ENCODE measurements at regions of chr11 and their contacts with region 1.

Region 1: DNA sequence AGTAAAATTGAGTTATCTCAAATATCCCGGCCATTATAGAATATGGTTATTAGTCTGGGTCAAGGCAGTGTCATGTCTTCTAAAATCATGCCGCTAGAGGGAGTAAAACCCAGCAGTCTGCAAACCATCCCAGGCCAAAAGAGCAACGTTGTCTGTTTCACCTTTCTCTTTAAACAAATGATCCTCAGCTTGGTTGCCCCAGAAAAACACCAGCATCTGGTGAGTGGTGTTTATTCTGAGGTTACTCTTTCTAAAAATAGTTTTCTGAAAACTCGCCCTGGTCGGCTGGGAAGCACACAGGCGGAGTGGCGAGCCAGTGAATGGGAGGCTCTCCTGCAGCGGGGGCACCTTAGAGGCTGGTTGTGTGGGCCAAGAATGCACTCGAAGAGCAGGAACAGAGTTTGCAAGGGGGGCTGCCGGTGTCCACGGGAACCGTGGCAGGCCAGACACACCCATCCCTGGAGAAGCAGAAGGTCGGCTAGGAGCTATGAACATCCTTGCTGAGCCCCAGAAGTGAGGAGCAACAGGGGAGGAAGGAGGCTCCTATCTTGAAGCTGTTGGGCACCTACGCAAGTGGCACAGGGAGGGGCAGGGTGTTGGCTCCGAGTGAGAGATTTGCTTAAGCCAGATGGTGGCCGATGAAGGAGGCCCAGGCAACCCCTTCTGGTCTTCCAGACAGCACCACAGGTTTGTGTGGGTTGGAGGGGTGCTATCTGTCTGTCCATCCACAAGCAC is 297.1 kb downstream of the ETS1 start:
- DNase-seq: peak; percentile 77
- H3K4me3 ChIP-seq: no peak overlapping the region
- H3K27ac ChIP-seq: no peak overlapping the region
- H3K4me1 ChIP-seq: no peaks in the 10 kb centered on the region
- H3K27me3 ChIP-seq: no peaks in the 10 kb centered on the region
- CTCF ChIP-seq: peak; percentile 71 to 72
- POLR2A ChIP-seq: no peak

Region 2: GRCh38 chr11:127943763-127944162 is 346.5 kb before region 1 on chr11:
- CTCF ChIA-PET with region 1: no interaction called
- POLR2A ChIA-PET with region 1: no interaction called
- dilution Hi-C with region 1: no loop called
- intact Hi-C with region 1: no loop called
- DNase-seq: no peak
- H3K4me3 ChIP-seq: no peak overlapping the region
- H3K27ac ChIP-seq: no peak overlapping the region
- H3K4me1 ChIP-seq: no peaks in the 10 kb centered on the region
- H3K27me3 ChIP-seq: no peaks in the 10 kb centered on the region
- CTCF ChIP-seq: no peak
- POLR2A ChIP-seq: no peak

Region 3: DNA sequence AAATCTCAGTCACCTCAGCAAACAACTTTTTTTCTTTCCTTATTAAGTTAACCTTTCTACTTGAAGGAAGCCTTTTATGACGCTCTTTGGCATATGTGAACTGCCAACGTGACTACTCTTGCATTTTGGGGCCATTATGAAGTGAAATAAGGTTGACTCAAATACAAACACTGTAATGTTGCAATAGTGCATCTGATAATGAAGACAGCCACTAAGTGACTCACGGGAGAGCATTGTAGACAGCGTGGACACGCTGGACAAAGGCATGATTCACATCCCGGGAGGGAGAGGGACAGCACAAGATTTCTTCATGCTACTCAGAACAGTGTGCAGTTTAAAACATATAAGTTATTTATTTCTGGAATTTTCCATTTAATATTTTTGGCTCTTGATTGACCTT is 263.7 kb before region 1 on chr11:
- CTCF ChIA-PET with region 1: no interaction called
- POLR2A ChIA-PET with region 1: no interaction called
- dilution Hi-C with region 1: no loop called
- intact Hi-C with region 1: loop called (anchors 1 kb)
- DNase-seq: peak; percentile 81
- H3K4me3 ChIP-seq: no peak overlapping the region
- H3K27ac ChIP-seq: peak overlapping the region; percentile 39
- H3K4me1 ChIP-seq: peaks cover 25% of the 10 kb centered on the region
- H3K27me3 ChIP-seq: no peaks in the 10 kb centered on the region
- CTCF ChIP-seq: no peak
- POLR2A ChIP-seq: no peak

Region 4: DNA sequence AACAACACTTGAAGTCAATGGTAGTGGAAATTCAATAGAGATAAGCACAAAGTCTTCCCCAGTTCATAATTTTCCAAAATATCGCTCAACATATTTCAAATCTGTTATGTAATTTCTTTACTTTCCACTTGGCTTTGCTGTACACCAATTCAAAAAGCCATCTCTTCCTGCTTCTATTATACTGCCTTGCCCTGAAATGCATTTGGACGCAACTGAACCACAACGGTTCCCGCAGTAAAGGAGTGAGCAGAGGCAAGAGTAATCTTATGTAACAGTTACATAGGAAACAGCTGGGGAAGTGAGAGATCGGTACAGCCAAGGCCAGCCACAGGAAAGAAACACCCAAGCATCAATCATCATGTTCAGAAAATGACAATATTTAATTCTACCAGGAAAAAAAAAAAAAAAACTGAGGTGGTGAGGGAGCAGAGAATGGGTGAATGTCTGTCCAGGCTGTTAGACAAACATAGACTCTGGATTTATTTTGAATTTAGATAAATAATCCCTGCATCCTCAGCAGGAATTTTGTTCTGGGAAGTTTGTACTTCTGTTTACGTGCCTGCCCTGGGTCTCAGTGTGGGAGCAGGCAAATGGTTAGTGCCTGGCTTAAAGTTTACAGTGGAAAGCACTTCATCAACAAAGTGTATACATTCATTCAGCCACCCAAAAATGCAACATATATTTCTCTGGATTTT is 95.1 kb before region 1 on chr11:
- CTCF ChIA-PET with region 1: interaction called, 8 read pairs
- POLR2A ChIA-PET with region 1: no interaction called
- dilution Hi-C with region 1: no loop called
- intact Hi-C with region 1: loop called (anchors 1 kb)
- DNase-seq: peak; percentile 98
- H3K4me3 ChIP-seq: no peak overlapping the region
- H3K27ac ChIP-seq: peak overlapping the region; percentile 65
- H3K4me1 ChIP-seq: peaks cover 12% of the 10 kb centered on the region
- H3K27me3 ChIP-seq: no peaks in the 10 kb centered on the region
- CTCF ChIP-seq: peak in 1 of 2 donors; percentile 9
- POLR2A ChIP-seq: peak; percentile 60

Region 5: DNA sequence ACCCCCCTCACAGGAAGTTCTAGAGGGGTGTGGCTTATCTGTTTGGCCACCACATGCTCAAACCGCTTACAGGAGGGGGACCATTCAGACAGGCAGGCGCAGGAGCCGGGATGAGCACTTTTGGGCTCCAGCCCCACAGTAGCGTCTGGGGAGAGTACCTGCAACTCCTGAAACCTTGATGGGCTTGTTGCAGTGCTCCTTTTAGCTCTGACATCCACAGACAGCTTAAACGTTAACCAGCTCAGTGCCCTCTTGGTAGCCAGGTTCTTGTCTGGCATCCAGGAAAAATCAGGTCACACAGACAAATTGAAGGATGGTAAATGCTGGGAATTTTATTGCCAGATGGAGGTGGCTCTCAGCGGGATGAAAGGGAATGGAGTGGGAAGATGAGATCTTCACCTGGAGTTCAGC is 29.3 kb before region 1 on chr11:
- CTCF ChIA-PET with region 1: no interaction called
- POLR2A ChIA-PET with region 1: no interaction called
- dilution Hi-C with region 1: no loop called
- intact Hi-C with region 1: no loop called
- DNase-seq: no peak
- H3K4me3 ChIP-seq: no peak overlapping the region
- H3K27ac ChIP-seq: no peak overlapping the region
- H3K4me1 ChIP-seq: no peaks in the 10 kb centered on the region
- H3K27me3 ChIP-seq: no peaks in the 10 kb centered on the region
- CTCF ChIP-seq: no peak
- POLR2A ChIP-seq: no peak

Region 6: DNA sequence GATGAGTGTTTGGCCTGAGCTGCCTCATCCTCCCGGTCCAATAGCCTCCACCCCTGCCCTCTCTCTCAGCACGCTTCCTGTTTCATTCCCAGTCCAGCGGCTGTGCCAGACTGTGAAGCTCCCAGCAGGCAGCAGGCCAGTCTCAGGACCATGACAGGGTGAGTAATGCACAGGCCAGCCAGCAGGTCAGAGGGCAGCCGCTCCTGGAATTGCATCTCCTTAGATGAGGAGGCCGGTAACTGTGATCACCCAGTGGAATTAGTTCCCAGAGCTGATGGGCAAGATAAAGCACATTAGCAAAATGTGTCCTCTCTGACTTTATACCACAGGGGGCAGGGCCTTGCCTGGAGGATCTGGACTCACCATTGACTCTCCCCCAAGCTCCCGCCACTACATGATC is 45.9 kb after region 1 on chr11:
- CTCF ChIA-PET with region 1: interaction called, 3 read pairs
- POLR2A ChIA-PET with region 1: no interaction called
- dilution Hi-C with region 1: no loop called
- intact Hi-C with region 1: loop called (anchors 1 kb)
- DNase-seq: peak; percentile 88
- H3K4me3 ChIP-seq: no peak overlapping the region
- H3K27ac ChIP-seq: peak overlapping the region; percentile 87
- H3K4me1 ChIP-seq: peaks cover 43% of the 10 kb centered on the region
- H3K27me3 ChIP-seq: no peaks in the 10 kb centered on the region
- CTCF ChIP-seq: no peak
- POLR2A ChIP-seq: peak; percentile 17

Region 7: GRCh38 chr11:128497061-128497775 is 206.9 kb after region 1 on chr11:
- CTCF ChIA-PET with region 1: interaction called, 4 read pairs
- POLR2A ChIA-PET with region 1: no interaction called
- dilution Hi-C with region 1: no loop called
- intact Hi-C with region 1: loop called (anchors 1 kb)
- DNase-seq: peak; percentile 96
- H3K4me3 ChIP-seq: peak overlapping the region in 1 of 3 experiments; percentile 28
- H3K27ac ChIP-seq: peak overlapping the region; percentile 94
- H3K4me1 ChIP-seq: peaks cover 67% of the 10 kb centered on the region
- H3K27me3 ChIP-seq: no peaks in the 10 kb centered on the region
- CTCF ChIP-seq: no peak
- POLR2A ChIP-seq: no peak

Region 8: DNA sequence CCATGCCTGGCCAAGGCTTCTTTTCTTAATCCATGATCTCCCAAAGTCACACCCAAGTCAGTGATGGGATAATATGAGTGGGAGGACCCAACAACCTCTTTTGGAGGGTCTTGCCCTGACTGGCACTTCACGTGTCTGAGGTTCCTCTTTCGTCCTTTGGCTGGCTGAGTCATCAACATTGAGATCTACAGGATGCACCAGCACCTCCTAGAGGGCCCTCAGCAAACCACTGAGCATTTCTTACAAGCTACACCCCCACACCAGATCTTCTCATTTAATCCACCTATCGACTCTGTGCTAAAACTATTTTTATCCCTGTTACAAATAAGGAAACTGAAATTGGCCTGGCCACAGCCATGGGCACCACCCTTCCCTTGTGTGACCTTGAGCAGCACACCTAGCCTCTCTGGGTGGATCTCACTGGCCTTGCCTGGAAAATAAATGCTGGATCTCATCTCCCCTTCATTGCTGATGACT is 467.0 kb after region 1 on chr11:
- CTCF ChIA-PET with region 1: no interaction called
- POLR2A ChIA-PET with region 1: no interaction called
- dilution Hi-C with region 1: no loop called
- intact Hi-C with region 1: loop called (anchors 10 kb)
- DNase-seq: peak; percentile 75
- H3K4me3 ChIP-seq: no peak overlapping the region
- H3K27ac ChIP-seq: peak overlapping the region; percentile 21
- H3K4me1 ChIP-seq: peaks cover 19% of the 10 kb centered on the region
- H3K27me3 ChIP-seq: no peaks in the 10 kb centered on the region
- CTCF ChIP-seq: peak; percentile 55 to 61
- POLR2A ChIP-seq: no peak